AG04449 (cell line): ENCODE measurements at regions of chr6 and their contacts with region 1.

Region 1: GRCh38 chr6:118876814-118877213 is 17.1 kb upstream of the ASF1A start:
- DNase-seq: peak; percentile 40
- H3K4me3 ChIP-seq: no peak overlapping the region
- CTCF ChIP-seq: no peak

Region 2: DNA sequence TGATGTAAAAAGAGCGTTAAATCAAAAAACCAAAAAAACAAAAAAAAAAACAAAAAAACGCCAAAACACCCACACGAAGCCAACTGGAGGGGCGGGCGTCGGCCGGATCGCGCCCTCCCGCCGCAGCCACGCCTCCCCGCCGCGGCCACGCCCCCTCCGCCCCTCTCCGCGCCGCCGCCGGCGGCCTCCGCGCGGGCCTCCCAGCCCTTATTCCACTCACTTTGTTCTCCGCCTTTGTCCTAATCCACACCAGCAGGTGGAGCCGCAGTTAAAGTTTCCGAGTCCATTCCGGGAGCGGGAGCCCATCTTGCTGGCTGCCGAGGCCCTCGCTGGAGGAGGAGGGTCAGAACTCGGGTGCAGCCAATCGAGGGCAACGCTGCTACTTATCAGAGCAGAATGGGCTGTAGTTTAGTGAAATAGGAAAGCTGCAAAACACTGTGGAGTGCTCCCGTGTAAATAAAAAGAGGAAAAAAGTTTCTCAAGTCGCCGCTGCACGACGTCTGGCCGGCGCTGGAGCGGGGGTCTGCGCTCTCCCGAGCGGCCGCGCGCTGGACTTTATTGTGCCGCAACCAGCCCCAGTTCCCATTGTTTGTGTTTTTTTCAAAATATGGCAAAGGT is 17.1 kb after region 1 on chr6 and contains the start of gene ASF1A:
- CTCF ChIA-PET with region 1: interaction called, 10 read pairs
- POLR2A ChIA-PET with region 1: interaction called, 6 read pairs
- DNase-seq: peak; percentile 89
- H3K4me3 ChIP-seq: peak within 1 kb of the TSS; percentile 83
- CTCF ChIP-seq: peak; percentile 78